AG04449 (cell line): ENCODE measurements at regions of chr1 and their contacts with region 1.

Region 1: DNA sequence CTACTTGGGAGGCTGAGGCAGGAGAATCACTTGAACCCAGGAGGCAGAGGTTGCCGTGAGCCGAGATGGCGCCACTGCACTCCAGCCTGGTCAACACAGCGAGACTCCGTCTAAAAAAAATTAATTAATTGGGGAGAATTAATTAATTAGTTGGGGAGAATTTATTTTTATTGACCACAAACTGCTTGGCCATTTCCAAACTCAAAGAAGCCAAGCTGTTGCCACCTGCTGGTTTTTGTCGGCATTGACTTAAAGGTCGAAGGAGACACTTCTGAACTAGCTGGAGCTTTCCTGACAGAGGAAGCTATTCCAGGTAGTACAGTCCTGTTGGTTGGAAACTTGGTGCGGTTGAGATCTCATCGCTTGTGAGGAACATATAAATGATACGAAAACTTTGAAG is 13.1 kb downstream of the MAP1LC3C start:
- DNase-seq: no peak
- H3K4me3 ChIP-seq: no peak overlapping the region
- CTCF ChIP-seq: peak; percentile 43

Region 2: GRCh38 chr1:241895013-241895412 is 90.8 kb before region 1 on chr1:
- CTCF ChIA-PET with region 1: interaction called, 32 read pairs
- POLR2A ChIA-PET with region 1: no interaction called
- DNase-seq: no peak
- H3K4me3 ChIP-seq: no peak overlapping the region
- CTCF ChIP-seq: no peak

Region 3: GRCh38 chr1:241902391-241903065 is 83.3 kb before region 1 on chr1:
- CTCF ChIA-PET with region 1: interaction called, 32 read pairs
- POLR2A ChIA-PET with region 1: no interaction called
- DNase-seq: no peak
- H3K4me3 ChIP-seq: no peak overlapping the region
- CTCF ChIP-seq: no peak